ENCODE measurements at regions of chr12 and their contacts with region 1.

Region 1: DNA sequence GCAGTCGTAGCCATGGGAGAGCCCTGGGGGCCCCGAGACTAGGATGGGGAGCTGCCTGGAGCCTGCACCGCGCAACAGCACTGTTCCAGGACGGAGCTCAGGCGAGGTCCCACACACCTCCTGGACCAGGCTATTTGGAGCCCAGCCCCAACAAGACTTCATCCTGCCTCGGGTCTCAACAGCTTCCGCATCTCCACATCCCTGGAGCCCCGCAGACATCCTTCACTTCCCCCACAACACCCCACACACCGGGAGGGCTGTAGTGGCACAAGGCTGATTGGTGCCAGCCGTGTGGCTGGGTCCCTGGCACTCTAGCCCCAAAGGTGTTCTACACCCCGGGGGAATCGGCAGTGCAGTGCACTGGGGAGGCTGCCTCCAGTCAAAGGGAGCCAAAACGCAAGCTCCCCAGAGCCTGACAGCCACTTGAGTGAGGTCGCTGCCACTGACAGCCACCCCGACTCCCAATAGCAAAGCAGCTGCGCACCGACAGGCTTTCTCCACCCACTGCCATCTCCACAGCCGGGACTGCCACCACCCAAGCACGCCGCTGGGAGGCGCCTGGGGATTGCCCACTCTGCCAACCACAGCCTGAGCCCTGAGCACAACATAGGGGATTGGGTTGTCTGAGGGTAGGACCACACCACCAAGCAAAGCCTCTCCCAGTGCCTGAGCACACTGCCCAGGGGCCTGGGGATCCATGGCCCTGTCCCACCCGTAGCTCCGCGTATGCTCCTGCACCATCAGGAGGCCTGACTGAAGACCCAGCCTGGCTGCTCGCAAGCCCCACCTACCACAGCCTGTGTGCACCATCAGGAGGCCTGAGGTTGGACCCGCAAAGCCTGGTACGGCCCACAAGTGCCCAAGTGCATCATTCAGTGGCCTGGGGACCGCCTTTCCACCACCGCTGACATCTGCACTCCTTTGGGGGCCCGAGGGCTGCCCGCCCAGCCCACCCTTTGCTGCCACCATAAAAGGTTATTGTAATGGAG is 13.2 kb upstream of the KLRF1 start:
- DNase-seq: peak; percentile 35 to 83
- H3K4me3 ChIP-seq: 0 out of 2 replicates have a peak overlapping the region, but pooled peaks have one; percentile 33
- H3K27ac ChIP-seq: no peak overlapping the region
- H3K4me1 ChIP-seq: no peaks in the 10 kb centered on the region
- H3K27me3 ChIP-seq: no peaks in the 10 kb centered on the region
- CTCF ChIP-seq: peak; percentile 83

Region 2: DNA sequence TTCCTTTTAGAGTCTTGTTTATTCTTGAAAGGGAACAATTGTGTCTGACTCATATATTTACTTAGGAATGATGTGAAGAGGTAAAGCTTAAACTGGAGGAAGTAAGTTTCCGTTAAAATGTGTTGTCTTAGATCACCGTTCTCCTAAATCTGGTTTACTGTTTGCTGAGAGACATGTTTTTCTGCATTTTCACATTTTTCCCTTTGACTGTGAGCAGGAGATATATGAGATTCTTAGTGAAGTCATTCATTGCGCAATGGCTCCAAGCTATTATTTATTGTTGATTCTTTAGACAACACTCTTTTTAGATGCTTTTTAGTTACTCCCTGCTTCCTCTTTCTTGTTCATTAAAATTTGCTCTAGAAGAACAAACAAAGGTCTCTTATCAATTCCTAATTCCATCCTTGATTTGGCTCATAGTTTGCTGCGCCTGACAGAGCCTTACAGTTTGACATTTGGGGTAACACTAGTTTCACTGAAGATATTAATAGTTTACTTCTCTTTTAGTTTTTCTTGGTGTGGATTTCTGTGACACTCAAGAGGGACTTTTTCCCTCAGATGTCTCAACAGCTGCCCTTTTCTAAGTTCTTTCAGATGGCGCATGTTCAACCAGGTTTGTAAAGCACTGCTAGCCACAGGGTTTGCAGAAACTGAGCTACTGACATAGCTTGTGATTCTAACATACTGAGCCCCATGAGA is 92.6 kb before region 1 on chr12:
- CTCF ChIA-PET with region 1: no interaction called
- POLR2A ChIA-PET with region 1: no interaction called
- intact Hi-C with region 1: no loop called
- DNase-seq: peak in 1 of 2 experiments; percentile 90
- H3K4me3 ChIP-seq: no peak overlapping the region
- H3K27ac ChIP-seq: peak overlapping the region; percentile 69
- H3K4me1 ChIP-seq: peaks cover 25% of the 10 kb centered on the region
- H3K27me3 ChIP-seq: no peaks in the 10 kb centered on the region
- CTCF ChIP-seq: no peak

Region 3: GRCh38 chr12:9829990-9830389 is 15.9 kb after region 1 on chr12:
- CTCF ChIA-PET with region 1: no interaction called
- POLR2A ChIA-PET with region 1: interaction called, 27 read pairs
- intact Hi-C with region 1: no loop called
- DNase-seq: peak in 1 of 2 experiments; percentile 19
- H3K4me3 ChIP-seq: no peak overlapping the region
- H3K27ac ChIP-seq: no peak overlapping the region
- H3K4me1 ChIP-seq: no peaks in the 10 kb centered on the region
- H3K27me3 ChIP-seq: no peaks in the 10 kb centered on the region
- CTCF ChIP-seq: no peak

Region 4: GRCh38 chr12:9925708-9926393 is 111.7 kb after region 1 on chr12:
- CTCF ChIA-PET with region 1: interaction called, 13 read pairs
- POLR2A ChIA-PET with region 1: no interaction called
- intact Hi-C with region 1: loop called (anchors 1 kb)
- DNase-seq: peak in 1 of 2 experiments; percentile 6
- H3K4me3 ChIP-seq: 0 out of 2 replicates have a peak overlapping the region, but pooled peaks have one; percentile 9
- H3K27ac ChIP-seq: no peak overlapping the region
- H3K4me1 ChIP-seq: no peaks in the 10 kb centered on the region
- H3K27me3 ChIP-seq: no peaks in the 10 kb centered on the region
- CTCF ChIP-seq: peak; percentile 70

Region 5: GRCh38 chr12:10016881-10017280 is 202.8 kb after region 1 on chr12:
- CTCF ChIA-PET with region 1: no interaction called
- POLR2A ChIA-PET with region 1: no interaction called
- intact Hi-C with region 1: loop called (anchors 5 kb)
- DNase-seq: peak in 1 of 2 experiments; percentile 46
- H3K4me3 ChIP-seq: no peak overlapping the region
- H3K27ac ChIP-seq: peak overlapping the region; percentile 15
- H3K4me1 ChIP-seq: 0 out of 2 replicates have a peak, but pooled peaks cover 5% of the 10 kb centered on the region
- H3K27me3 ChIP-seq: no peaks in the 10 kb centered on the region
- CTCF ChIP-seq: no peak

Measured in PC-9 (cell line).